Activated CD4-positive, alpha-beta T cell treated with anti-CD3 and anti-CD28 coated beads for 36 hours (primary cell): ENCODE measurements at regions of chr10 and their contacts with region 1.

Region 1: DNA sequence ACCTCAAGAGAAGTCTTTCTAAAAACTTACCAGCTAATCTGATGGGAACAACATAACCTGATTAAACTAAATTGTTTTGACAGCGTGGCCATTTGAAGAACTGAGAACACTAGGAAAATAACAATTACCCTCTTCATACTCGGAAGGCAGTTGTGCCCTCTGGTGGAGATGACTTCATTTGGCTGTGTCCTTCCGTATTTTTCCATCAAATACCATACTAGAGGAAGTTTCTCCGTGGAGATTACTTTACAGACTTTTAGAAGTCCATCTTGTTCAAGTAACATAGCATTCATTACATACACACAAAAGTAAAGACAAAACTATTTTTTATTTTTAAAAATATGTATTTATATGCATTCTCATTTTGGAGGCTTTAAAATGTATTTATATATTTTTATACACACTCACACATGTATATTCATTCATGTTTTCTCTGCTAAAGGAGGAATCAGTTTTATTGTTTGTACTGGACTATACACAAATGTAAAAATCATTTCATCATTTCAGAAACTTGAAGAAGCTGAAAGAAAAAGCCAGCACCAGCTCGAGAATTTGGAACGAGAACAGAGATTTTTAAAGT is 25.2 kb downstream of the SMNDC1 start:
- DNase-seq: peak; percentile 60
- ATAC-seq: peak; percentile 51
- H3K4me3 Mint-ChIP-seq: no peak overlapping the region
- H3K27ac Mint-ChIP-seq: no peak overlapping the region
- H3K4me1 Mint-ChIP-seq: peaks cover 23% of the 10 kb centered on the region
- H3K27me3 Mint-ChIP-seq: no peaks in the 10 kb centered on the region

Region 2: DNA sequence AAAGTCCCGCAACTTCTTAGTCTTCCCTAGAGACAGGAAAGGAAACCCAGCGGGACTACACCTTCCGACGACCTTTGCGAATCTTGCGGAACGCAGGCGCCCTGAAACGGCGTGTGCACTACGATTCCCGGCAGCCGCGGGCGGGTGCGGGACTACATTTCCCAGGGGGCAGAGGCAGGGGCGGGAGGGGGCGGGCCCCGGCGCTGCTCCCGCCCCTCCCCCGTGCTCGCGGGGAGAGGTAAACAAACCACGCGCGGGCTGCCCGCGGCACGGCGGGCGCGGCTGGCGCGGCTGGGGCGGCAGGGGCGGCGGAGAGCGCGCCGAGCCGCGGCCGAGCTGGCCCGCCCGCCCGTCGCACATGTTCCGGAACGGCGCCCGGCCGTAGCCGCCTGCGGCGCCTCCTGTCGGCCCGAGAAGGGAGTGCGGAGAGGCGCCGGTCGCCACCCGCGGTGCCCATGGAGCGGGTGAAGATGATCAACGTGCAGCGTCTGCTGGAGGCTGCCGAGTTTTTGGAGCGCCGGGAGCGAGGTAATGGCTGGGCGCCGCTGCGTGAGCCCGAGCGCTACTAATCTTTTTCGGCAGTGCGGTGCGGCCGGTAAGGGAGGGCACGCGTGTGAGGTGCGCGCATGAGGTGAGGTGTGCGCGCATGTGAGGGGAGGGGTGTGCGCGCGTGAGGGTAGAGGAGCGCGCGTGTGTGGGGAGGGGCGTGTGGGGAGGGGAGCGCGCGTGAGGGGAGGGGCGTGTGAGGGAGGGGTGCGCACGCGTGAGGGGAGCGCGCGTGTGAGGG is 53.5 kb before region 1 on chr10:
- CTCF ChIA-PET with region 1: interaction called, 7 read pairs
- POLR2A ChIA-PET with region 1: no interaction called
- intact Hi-C with region 1: loop called in 1 of 2 experiments (anchors 2 kb)
- DNase-seq: peak; percentile 94
- ATAC-seq: peak; percentile 48
- H3K4me3 Mint-ChIP-seq: peak overlapping the region; percentile 95
- H3K27ac Mint-ChIP-seq: peak overlapping the region; percentile 95
- H3K4me1 Mint-ChIP-seq: peaks cover 44% of the 10 kb centered on the region
- H3K27me3 Mint-ChIP-seq: no peaks in the 10 kb centered on the region

Region 3: GRCh38 chr10:110252151-110252550 is 27.3 kb before region 1 on chr10:
- CTCF ChIA-PET with region 1: interaction called, 19 read pairs
- POLR2A ChIA-PET with region 1: no interaction called
- intact Hi-C with region 1: no loop called
- DNase-seq: no peak
- ATAC-seq: no peak
- H3K4me3 Mint-ChIP-seq: no peak overlapping the region
- H3K27ac Mint-ChIP-seq: no peak overlapping the region
- H3K4me1 Mint-ChIP-seq: peaks cover 39% of the 10 kb centered on the region
- H3K27me3 Mint-ChIP-seq: peaks cover 10% of the 10 kb centered on the region

Region 4: DNA sequence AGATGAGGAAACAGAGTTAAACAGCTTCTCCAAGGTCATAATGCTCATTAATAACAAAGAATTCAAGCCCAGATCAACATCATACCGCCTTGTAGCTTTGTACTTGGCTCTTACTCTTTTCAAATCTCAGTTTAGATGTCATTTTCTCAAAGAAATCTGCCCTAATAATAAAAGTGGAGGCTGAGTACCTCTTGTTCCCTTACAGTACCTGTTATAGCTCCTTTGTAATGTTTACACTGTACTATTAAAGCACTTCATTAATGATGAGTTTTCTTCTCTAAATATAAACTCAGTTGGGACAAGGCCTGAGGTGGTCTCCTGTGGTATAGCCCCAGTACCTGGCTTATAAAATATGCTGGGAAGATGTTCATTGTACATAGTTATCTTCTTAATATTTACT is 17.5 kb after region 1 on chr10:
- CTCF ChIA-PET with region 1: interaction called, 14 read pairs
- POLR2A ChIA-PET with region 1: no interaction called
- intact Hi-C with region 1: no loop called
- DNase-seq: no peak
- ATAC-seq: no peak
- H3K4me3 Mint-ChIP-seq: no peak overlapping the region
- H3K27ac Mint-ChIP-seq: no peak overlapping the region
- H3K4me1 Mint-ChIP-seq: peaks cover 33% of the 10 kb centered on the region
- H3K27me3 Mint-ChIP-seq: no peaks in the 10 kb centered on the region

Region 5: GRCh38 chr10:111875725-111876124 is 1596.2 kb after region 1 on chr10:
- CTCF ChIA-PET with region 1: no interaction called
- POLR2A ChIA-PET with region 1: no interaction called
- intact Hi-C with region 1: no loop called
- DNase-seq: no peak
- ATAC-seq: no peak
- H3K4me3 Mint-ChIP-seq: no peak overlapping the region
- H3K27ac Mint-ChIP-seq: no peak overlapping the region
- H3K4me1 Mint-ChIP-seq: no peaks in the 10 kb centered on the region
- H3K27me3 Mint-ChIP-seq: no peaks in the 10 kb centered on the region